Transverse colon (tissue), 4 donors: ENCODE measurements at regions of chr11 and their contacts with region 1.

Region 1: DNA sequence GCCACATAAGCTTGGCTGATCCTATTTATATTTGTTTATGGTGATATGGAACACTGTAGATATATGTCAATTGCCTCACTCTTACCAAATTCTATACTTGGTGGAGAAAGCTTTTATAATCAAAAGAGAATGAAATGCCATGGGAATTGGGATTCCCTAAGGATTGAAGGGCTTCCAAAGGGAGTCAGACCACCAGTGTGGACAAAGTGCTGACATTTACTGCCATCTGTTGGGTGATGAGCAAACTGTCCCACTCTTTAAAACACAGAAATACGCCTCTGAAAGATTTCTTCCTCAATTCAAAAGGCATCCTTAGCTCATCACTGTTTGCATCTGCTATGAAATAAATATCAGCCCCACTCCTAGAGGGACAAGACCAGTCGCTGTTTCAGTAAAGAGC is 7.1 kb downstream of the SLC1A2 start:
- DNase-seq: no peak
- H3K4me3 ChIP-seq: no peak overlapping the region
- H3K27ac ChIP-seq: no peak overlapping the region
- H3K4me1 ChIP-seq: no peaks in the 10 kb centered on the region
- H3K27me3 ChIP-seq: peaks cover 34% of the 10 kb centered on the region
- CTCF ChIP-seq: no peak
- EP300 ChIP-seq: no peak
- POLR2A ChIP-seq: no peak

Region 2: GRCh38 chr11:35352077-35352888 is 60.0 kb before region 1 on chr11:
- in situ Hi-C with region 1: loop called in 1 of 4 experiments (anchors 10 kb)
- intact Hi-C with region 1: no loop called
- DNase-seq: no peak
- H3K4me3 ChIP-seq: no peak overlapping the region
- H3K27ac ChIP-seq: no peak overlapping the region
- H3K4me1 ChIP-seq: no peaks in the 10 kb centered on the region
- H3K27me3 ChIP-seq: no peaks in the 10 kb centered on the region
- CTCF ChIP-seq: no peak
- EP300 ChIP-seq: no peak
- POLR2A ChIP-seq: no peak

Region 3: GRCh38 chr11:35617687-35618496 is 205.6 kb after region 1 on chr11 and contains the start of gene FJX1:
- in situ Hi-C with region 1: no loop called
- intact Hi-C with region 1: no loop called
- DNase-seq: peak; percentile 17
- H3K4me3 ChIP-seq: peak within 1 kb of the TSS; percentile 44 to 52 (median 48)
- H3K27ac ChIP-seq: peak within 1 kb of the TSS; percentile 53 to 82 (median 72)
- H3K4me1 ChIP-seq: peaks cover 11 to 35% (median 21%) of the 10 kb centered on the region in 4 donors
- H3K27me3 ChIP-seq: peaks cover 82% of the 10 kb centered on the region
- CTCF ChIP-seq: no peak
- EP300 ChIP-seq: no peak
- POLR2A ChIP-seq: no peak
- total RNA-seq, gene FJX1: 0.14 to 2.6 (median 0.64) TPM in 3 of 4 donors, not detected in the other